ENCODE measurements at regions of chr13 and their contacts with region 1.

Region 1: GRCh38 chr13:41668130-41668757 is 210.9 kb downstream of the RGCC start:
- DNase-seq: peak; percentile 71

Region 2: DNA sequence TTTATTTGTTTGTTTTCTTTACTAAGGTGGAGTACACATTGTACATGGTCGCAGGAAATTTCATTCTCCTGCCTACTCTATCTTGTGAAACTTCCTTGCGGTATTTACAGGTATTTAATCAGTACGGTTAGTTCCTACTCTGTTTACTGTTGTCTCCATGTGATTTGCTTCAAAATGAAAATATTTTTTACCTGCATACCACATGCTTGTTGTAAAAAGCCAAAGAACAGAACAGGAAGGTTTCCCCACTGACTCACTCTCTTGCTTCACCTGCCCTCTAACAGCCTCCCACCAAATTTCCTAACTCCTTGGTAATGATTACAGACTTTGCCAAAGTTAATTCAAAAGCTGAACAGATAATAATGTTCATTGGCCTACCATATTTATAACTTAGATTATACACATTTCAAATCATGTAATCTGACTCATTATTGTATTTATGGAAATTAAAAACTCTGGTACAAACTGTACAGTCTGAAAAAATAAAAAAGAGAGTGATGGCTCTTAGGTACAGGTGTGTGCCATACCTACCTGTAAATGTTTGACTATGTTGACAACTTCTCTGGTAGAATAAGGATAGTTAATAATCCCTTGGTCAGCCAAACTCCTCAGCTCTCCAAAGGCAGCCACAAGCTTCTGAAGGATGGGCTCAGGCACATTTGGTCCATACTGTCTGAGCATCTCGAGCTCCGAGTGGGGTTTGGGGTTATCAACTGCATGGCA is 52.8 kb after region 1 on chr13:
- intact Hi-C with region 1: no loop called
- DNase-seq: no peak

Region 3: DNA sequence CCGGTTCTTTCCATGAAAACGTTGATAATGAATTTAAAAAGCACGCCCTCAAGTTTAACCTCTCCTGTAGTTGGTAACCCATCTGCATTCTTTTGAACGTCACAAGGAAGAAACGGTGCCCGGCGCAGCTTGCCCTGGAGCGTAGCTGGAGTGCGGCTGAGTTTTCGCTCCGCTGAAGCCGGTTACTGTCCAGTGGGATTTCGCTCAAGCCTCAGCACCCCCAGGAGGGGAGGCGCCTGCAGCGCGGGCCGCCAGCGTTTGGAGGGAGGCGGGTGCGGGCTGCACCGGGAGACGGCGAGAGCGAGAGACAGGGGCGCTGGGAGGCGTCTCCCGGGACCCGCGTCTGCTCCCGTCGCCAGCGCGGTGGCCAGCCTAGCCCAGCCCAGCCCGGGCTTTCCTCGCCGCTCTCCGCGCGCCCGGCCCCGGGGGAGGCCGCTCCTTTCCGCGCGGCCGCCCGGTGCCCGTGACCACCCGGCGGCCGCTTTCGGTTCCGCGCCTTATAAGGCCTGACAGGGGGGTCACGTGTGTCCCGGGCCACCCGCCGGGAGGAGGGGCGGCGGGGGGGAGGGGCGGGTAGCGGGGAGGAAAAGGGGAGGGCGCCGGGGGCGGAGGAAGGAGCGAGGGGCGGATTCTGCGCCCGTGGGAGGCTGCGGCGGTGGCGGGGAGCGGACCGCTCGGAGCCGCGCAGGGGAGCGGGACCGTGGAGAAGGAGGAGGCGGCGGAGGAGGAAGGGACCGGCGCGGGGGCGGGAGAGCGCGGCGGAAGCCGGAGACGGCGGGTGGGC is 371.9 kb after region 1 on chr13:
- intact Hi-C with region 1: loop called (anchors 5 kb)
- DNase-seq: peak; percentile 93

Region 4: DNA sequence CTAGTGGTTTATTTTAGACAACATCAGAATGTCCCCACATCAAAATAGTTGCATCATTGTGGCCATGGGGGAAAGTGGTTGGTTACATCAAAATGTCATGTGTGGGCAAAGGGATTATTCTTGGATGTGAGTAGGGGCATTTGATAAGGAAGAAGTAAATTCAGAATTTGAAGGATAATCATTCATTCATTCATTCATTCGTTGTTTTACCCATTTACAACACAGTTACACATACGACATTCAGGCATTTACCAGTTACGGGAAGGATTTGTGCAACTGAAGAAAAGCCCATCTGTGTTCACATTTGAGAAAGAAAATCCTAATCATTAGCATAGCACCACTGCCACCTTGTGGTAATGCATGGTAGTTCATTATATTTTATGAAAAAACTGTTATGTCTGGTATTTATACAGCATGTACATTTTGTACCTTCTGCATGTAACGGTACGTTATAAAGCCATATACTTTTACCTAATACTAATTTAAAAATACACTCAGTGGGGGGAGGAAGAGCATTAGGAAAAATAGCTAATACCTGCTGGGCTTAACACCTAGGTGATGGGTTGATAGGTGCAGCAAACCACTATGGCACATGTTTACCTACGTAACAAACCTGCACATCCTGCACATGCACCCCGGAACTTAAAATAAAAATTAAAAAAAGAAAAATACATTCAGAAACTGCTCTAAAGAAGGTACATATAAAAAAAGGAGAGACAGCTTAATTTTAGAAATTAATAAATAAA is 442.3 kb after region 1 on chr13:
- intact Hi-C with region 1: loop called (anchors 5 kb)
- DNase-seq: no peak

Region 5: DNA sequence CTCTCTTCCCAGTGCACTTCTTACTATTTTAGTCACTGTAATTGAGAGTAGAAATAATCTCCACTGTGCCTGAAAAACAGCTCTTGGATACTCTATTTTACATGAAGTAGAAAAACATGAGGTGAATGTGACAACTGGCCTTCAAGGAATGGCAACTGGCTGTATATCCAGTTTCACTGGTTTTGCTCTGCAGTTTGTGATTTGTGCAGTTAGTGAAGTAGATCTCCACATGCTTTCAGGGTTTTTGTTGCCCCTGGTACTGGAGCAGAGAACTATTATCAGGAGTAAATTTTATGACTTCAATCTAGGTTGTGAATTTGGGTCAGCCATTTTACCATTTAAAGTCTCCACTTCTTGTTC is 771.9 kb after region 1 on chr13:
- intact Hi-C with region 1: no loop called
- DNase-seq: no peak

Measured in cardiac septum (tissue), 1 donor.